Common myeloid progenitor, CD34-positive (primary cell): ENCODE measurements at regions of chr3 and their contacts with region 1.

Region 1: GRCh38 chr3:143885780-143886427 is 37.6 kb upstream of the SLC9A9 start:
- DNase-seq: peak; percentile 42 to 71 (median 67)
- H3K4me3 ChIP-seq: no peak overlapping the region
- H3K27ac ChIP-seq: no peak overlapping the region
- H3K4me1 ChIP-seq: no peaks in the 10 kb centered on the region
- H3K27me3 ChIP-seq: no peaks in the 10 kb centered on the region

Region 2: DNA sequence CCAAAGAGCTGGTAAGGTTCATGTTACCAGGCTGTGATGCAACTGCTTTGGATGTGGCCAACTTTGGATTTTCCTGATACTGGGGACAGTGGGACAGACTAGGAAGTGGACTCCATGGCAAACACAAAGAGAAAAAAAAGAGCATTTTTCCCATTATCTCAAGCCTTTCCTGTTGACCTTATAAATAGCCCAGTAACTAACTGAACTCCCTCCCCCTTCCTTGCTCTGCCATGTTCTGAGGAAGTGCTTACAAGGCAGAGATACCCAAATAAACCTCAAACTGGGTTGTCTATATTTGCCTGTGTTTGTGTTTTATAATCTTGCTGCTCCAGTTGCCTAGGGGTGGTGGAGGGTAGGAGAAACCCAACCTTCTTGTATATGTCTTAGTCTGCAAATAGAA is 10.4 kb before region 1 on chr3:
- CTCF ChIA-PET with region 1: interaction called, 14 read pairs
- POLR2A ChIA-PET with region 1: no interaction called
- DNase-seq: peak; percentile 31 to 73 (median 54)
- H3K4me3 ChIP-seq: no peak overlapping the region
- H3K27ac ChIP-seq: peak overlapping the region in 1 of 2 experiments; percentile 3
- H3K4me1 ChIP-seq: peaks cover 0 to 12% (median 6%) of the 10 kb centered on the region in 4 experiments
- H3K27me3 ChIP-seq: no peaks in the 10 kb centered on the region